CD8-positive, alpha-beta memory T cell (primary cell): ENCODE measurements at regions of chr1 and their contacts with region 1.

Region 1: GRCh38 chr1:168082008-168082876 is 54.5 kb downstream of the GPR161 start:
- DNase-seq: peak; percentile 34 to 70 (median 41)
- H3K4me3 ChIP-seq: no peak overlapping the region
- H3K4me3 Mint-ChIP-seq: no peak overlapping the region
- H3K27ac ChIP-seq: no peak overlapping the region
- H3K27ac Mint-ChIP-seq: peak overlapping the region in 3 of 8 donors; percentile 23 to 64 (median 45)
- H3K4me1 ChIP-seq: no peaks in the 10 kb centered on the region
- H3K4me1 Mint-ChIP-seq: peaks cover 0 to 4% (median 3%) of the 10 kb centered on the region in 3 donors
- H3K27me3 ChIP-seq: no peaks in the 10 kb centered on the region
- H3K27me3 Mint-ChIP-seq: no peaks in the 10 kb centered on the region

Region 2: GRCh38 chr1:167936068-167936929 is 145.9 kb before region 1 on chr1 and contains the start of gene DCAF6:
- CTCF ChIA-PET with region 1: interaction called, 10 read pairs
- POLR2A ChIA-PET with region 1: no interaction called
- DNase-seq: peak; percentile 95 to 99 (median 99)
- H3K4me3 ChIP-seq: peak within 1 kb of the TSS; percentile 100
- H3K4me3 Mint-ChIP-seq: peak within 1 kb of the TSS; percentile 88 to 97 (median 94)
- H3K27ac ChIP-seq: peak within 1 kb of the TSS; percentile 96
- H3K27ac Mint-ChIP-seq: peak within 1 kb of the TSS; percentile 95 to 100 (median 98)
- H3K4me1 ChIP-seq: peaks cover 33% of the 10 kb centered on the region
- H3K4me1 Mint-ChIP-seq: peaks cover 33 to 63% (median 54%) of the 10 kb centered on the region in 3 donors
- H3K27me3 ChIP-seq: no peaks in the 10 kb centered on the region
- H3K27me3 Mint-ChIP-seq: no peaks in the 10 kb centered on the region
- total RNA-seq, gene DCAF6: 24.8 to 24.9 TPM